ENCODE measurements at regions of chr7 and their contacts with region 1.

Region 1: GRCh38 chr7:4343272-4344247 is 338.5 kb upstream of the FOXK1 start:
- DNase-seq: no peak
- H3K4me3 ChIP-seq: no peak overlapping the region
- H3K27ac ChIP-seq: no peak overlapping the region
- H3K4me1 ChIP-seq: no peaks in the 10 kb centered on the region
- H3K27me3 ChIP-seq: no peaks in the 10 kb centered on the region
- CTCF ChIP-seq: no peak
- EP300 ChIP-seq: no peak
- POLR2A ChIP-seq: no peak

Region 2: DNA sequence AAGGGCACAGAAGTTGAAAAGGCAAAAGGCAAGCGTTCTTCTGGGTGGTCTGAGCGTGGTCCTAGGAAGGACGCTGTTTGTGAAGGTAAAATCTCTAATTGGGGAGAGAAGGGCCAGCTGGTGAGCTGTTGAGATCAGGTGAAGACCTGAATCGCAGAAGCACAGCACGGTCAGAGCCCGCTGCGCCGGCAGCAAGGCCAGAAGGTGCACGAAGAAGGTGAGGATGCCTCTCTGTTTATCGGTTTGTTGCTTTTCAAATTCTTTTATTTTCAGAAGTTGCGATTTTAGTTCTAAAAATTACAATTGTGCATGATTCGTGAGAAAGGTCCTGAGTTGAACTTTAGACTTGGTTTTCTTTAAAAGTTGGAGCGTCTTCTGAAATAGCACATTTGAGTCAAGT is 90.7 kb after region 1 on chr7:
- in situ Hi-C with region 1: loop called in 1 of 4 experiments (anchors 25 kb)
- intact Hi-C with region 1: no loop called
- DNase-seq: no peak
- H3K4me3 ChIP-seq: no peak overlapping the region
- H3K27ac ChIP-seq: no peak overlapping the region
- H3K4me1 ChIP-seq: no peaks in the 10 kb centered on the region
- H3K27me3 ChIP-seq: peaks cover 2% of the 10 kb centered on the region
- CTCF ChIP-seq: no peak
- EP300 ChIP-seq: no peak
- POLR2A ChIP-seq: no peak